Right cardiac atrium (tissue), 5 donors: ENCODE measurements at regions of chr2 and their contacts with region 1.

Region 1: GRCh38 chr2:158006961-158007719 is 94.5 kb upstream of the UPP2 start:
- DNase-seq: no peak
- ATAC-seq: no peak
- H3K4me3 ChIP-seq: no peak overlapping the region
- H3K27ac ChIP-seq: no peak overlapping the region
- H3K4me1 ChIP-seq: peaks cover 2% of the 10 kb centered on the region
- H3K27me3 ChIP-seq: no peaks in the 10 kb centered on the region

Region 2: GRCh38 chr2:157492189-157492773 is 514.9 kb before region 1 on chr2:
- intact Hi-C with region 1: loop called (anchors 5 to 10 kb)
- DNase-seq: peak; percentile 60 to 85 (median 67)
- ATAC-seq: peak; percentile 72 to 81
- H3K4me3 ChIP-seq: no peak overlapping the region
- H3K27ac ChIP-seq: no peak overlapping the region
- H3K4me1 ChIP-seq: no peaks in the 10 kb centered on the region
- H3K27me3 ChIP-seq: no peaks in the 10 kb centered on the region

Region 3: GRCh38 chr2:157497638-157498314 is 509.4 kb before region 1 on chr2:
- intact Hi-C with region 1: loop called (anchors 5 to 10 kb)
- DNase-seq: no peak
- ATAC-seq: peak; percentile 60 to 67
- H3K4me3 ChIP-seq: no peak overlapping the region
- H3K27ac ChIP-seq: no peak overlapping the region
- H3K4me1 ChIP-seq: no peaks in the 10 kb centered on the region
- H3K27me3 ChIP-seq: no peaks in the 10 kb centered on the region

Region 4: GRCh38 chr2:157777427-157777826 is 229.7 kb before region 1 on chr2:
- intact Hi-C with region 1: loop called (anchors 2 to 5 kb)
- DNase-seq: peak in 2 of 3 donors; percentile 40 to 59
- ATAC-seq: no peak
- H3K4me3 ChIP-seq: no peak overlapping the region
- H3K27ac ChIP-seq: no peak overlapping the region
- H3K4me1 ChIP-seq: no peaks in the 10 kb centered on the region
- H3K27me3 ChIP-seq: no peaks in the 10 kb centered on the region

Region 5: GRCh38 chr2:158049129-158049855 is 42.2 kb after region 1 on chr2:
- intact Hi-C with region 1: no loop called
- DNase-seq: no peak
- ATAC-seq: no peak
- H3K4me3 ChIP-seq: no peak overlapping the region
- H3K27ac ChIP-seq: no peak overlapping the region
- H3K4me1 ChIP-seq: no peaks in the 10 kb centered on the region
- H3K27me3 ChIP-seq: no peaks in the 10 kb centered on the region

Region 6: DNA sequence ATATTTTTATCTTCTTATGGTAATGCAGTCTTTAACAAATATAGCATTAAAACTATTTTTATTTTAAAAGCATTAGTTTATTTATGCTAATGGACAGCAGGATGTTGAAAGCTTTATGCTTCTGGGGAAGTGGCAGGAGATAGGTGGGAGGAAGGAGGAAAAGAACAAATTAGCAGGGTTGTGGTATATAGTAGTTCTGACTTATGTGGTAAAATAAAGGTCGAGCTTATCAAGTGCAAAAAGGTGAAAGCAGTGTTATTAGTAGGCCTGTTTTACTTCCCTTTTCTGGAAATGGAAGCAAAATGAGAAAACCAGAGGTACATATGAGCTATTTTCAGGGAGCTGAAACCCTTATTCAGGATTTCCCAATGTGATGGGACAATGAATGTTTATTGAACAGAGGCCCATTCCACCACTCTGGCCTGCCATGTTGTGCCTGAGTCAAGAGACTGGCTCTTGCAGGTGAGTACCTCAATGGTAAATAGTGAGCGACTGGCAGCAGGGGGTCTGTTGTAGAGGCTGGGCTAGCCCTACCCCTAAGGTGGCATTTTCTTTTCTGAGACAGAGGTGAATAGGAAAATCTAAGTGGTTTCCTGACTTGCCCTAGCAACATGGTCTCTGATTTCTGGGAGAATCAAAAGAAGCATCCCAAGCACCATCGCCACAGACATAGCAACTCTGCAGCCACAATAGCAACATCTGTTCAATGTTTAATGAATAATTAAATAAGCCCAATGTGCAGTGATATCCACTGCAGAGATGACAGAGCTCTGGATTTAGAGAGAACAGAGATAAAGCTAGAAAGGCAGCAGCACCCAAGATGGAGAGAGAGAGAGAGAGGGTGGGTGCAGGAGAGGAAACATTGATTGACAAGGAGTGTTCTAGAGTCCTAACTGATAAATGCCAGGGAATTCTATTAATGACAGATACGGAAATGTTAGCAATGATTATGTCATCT is 214.2 kb after region 1 on chr2:
- intact Hi-C with region 1: no loop called
- DNase-seq: no peak
- ATAC-seq: no peak
- H3K4me3 ChIP-seq: no peak overlapping the region
- H3K27ac ChIP-seq: no peak overlapping the region
- H3K4me1 ChIP-seq: no peaks in the 10 kb centered on the region
- H3K27me3 ChIP-seq: no peaks in the 10 kb centered on the region